H1 (cell line): ENCODE measurements at regions of chr12 and their contacts with region 1.

Region 1: DNA sequence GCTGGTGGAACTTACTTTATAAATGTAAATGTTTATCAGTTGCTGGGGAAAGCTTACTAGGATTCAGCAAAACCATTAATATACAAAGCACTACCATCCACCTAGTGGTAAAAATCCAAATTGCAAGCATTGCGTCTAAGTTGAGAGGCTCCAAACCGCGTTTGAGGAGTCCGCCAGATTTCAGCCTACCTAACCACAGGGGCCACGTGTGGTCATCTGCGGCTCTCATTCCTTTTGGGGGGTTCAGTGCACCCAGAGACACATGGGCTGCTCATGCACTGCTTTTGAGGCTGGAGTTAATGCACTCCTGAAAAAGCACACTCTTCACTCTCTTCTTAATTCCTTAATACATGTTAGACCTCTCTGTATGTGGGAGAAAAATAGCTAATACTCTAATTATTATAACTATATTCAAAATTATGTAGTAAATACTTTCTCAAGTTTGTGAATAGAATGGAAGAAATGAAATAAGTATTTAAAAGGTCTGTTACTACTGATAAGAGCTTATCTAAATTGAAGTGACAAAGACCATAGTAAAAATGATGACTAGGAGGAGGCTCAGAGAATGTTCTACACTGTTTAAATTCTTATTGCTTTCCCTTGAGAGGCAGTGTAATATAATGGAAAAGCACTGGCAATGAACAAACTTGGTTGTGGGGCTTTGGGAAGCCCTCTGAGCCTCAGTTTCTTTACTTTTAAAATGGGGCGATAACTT is 41.4 kb upstream of the MANSC4 start:
- DNase-seq: peak in 1 of 2 experiments; percentile 17
- H3K4me3 ChIP-seq: no peak overlapping the region
- H3K27ac ChIP-seq: no peak overlapping the region
- H3K4me1 ChIP-seq: no peaks in the 10 kb centered on the region
- H3K27me3 ChIP-seq: no peaks in the 10 kb centered on the region; a peak in 1 of 7 replicates
- CTCF ChIP-seq: peak; percentile 17 to 77 (median 56)
- EP300 ChIP-seq: no peak
- POLR2A ChIP-seq: no peak
- RAD21 ChIP-seq: peak; percentile 61 to 63

Region 2: DNA sequence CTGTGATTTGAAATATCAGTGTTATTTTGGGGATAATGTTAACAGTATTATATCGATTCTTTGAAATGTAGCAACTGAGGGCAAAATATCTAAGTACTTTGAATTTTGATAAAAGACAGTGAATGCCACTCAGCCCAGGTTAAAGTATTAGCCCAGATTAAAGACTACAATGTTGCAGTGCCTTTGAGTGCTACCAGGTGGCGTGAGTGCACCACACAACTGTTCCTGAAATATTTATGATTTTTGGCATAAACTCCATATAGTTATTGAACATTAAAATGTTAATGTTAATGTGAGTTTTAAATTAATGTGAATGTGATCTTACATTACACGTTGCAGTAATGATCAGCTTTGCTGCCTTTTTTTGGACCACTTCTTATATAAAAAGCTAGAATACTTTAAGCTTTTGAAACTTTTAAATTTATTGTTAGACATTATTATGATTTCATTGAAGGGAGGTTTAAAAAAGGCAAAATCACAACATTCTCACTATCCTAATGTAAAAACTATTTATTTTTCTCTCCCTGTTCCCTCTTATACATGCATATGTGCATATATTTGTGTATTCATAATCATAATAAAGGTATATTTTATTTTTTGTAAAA is 88.3 kb before region 1 on chr12:
- CTCF ChIA-PET with region 1: interaction called, 15 read pairs
- POLR2A ChIA-PET with region 1: no interaction called
- DNase-seq: no peak
- H3K4me3 ChIP-seq: no peak overlapping the region
- H3K27ac ChIP-seq: no peak overlapping the region
- H3K4me1 ChIP-seq: no peaks in the 10 kb centered on the region
- H3K27me3 ChIP-seq: no peaks in the 10 kb centered on the region
- CTCF ChIP-seq: peak in 2 of 3 experiments; percentile 74 to 75; a peak in 3 of 4 replicates
- EP300 ChIP-seq: no peak
- POLR2A ChIP-seq: no peak
- RAD21 ChIP-seq: peak; percentile 86 to 90

Region 3: GRCh38 chr12:27807063-27807703 is 14.2 kb before region 1 on chr12:
- CTCF ChIA-PET with region 1: interaction called, 27 read pairs
- POLR2A ChIA-PET with region 1: no interaction called
- DNase-seq: no peak
- H3K4me3 ChIP-seq: no peak overlapping the region
- H3K27ac ChIP-seq: no peak overlapping the region
- H3K4me1 ChIP-seq: no peaks in the 10 kb centered on the region
- H3K27me3 ChIP-seq: no peaks in the 10 kb centered on the region
- CTCF ChIP-seq: peak in 2 of 3 experiments; percentile 14 to 16; a peak in 2 of 4 replicates
- EP300 ChIP-seq: no peak
- POLR2A ChIP-seq: no peak
- RAD21 ChIP-seq: peak; percentile 20 to 42; a peak in 3 of 4 replicates

Region 4: DNA sequence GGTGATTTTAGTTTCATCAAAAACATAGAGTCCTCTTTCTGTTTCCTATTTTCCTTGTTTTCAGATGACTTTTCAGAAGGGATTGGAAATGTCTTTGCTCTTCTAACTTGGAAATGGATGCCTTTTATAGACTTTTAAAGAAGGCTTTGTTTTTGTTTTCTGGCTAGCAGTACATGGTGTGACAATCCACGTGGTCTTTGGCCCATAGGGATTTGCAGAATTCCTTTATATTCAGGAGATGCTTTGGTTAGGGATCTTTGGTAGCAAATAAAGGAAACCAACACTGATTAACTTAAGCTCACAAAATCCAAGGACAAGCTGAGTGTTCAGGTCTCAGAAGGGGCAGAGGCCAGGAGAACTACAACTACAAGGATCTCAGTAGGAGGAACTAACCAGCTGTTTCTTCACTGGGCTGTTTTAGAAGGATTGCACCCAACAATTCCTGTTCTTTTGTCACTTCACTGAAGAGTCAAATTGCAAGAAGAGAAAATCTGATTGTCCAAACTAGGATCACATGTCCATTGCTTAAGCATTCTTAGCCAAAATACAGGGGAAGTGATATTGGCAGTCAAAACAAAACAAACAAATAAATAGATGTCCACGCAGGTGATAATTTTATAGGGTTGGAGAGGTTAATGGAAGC is 17.2 kb after region 1 on chr12:
- CTCF ChIA-PET with region 1: interaction called, 19 read pairs
- POLR2A ChIA-PET with region 1: no interaction called
- DNase-seq: no peak
- H3K4me3 ChIP-seq: no peak overlapping the region
- H3K27ac ChIP-seq: no peak overlapping the region
- H3K4me1 ChIP-seq: no peaks in the 10 kb centered on the region
- H3K27me3 ChIP-seq: no peaks in the 10 kb centered on the region
- CTCF ChIP-seq: no peak
- EP300 ChIP-seq: no peak
- POLR2A ChIP-seq: no peak
- RAD21 ChIP-seq: no peak

Region 5: DNA sequence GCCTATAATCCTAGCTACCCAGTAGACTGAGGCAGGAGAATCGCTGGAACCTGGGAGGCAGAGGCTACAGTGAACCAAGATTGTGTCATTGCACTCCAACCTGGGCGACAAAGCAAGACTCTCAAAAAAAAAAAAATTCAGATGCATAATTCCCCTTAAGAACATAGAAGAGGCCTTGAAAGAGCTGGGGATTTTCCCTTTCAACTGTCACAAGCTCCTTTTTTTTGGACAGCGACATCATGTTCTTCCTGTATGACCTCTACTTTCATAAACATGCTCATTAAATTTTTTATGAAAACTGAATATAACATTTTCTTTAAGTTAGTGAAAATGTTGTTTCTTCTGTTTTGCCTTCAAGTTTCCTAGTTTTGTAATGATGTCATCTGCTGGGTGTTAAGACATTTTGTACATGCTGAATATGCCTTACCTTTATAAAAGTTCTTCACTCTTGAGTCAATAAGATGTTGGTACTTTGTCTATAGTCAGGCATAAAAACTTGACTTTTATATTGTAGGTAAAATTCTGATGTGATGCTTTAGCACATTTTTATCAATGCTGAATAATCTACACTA is 75.1 kb after region 1 on chr12:
- CTCF ChIA-PET with region 1: no interaction called
- POLR2A ChIA-PET with region 1: no interaction called
- DNase-seq: no peak
- H3K4me3 ChIP-seq: no peak overlapping the region
- H3K27ac ChIP-seq: no peak overlapping the region
- H3K4me1 ChIP-seq: no peaks in the 10 kb centered on the region
- H3K27me3 ChIP-seq: no peaks in the 10 kb centered on the region
- CTCF ChIP-seq: no peak
- EP300 ChIP-seq: no peak
- POLR2A ChIP-seq: no peak
- RAD21 ChIP-seq: no peak